ENCODE measurements at regions of chr4 and their contacts with region 1.

Region 1: GRCh38 chr4:79042079-79042674 is 102.9 kb upstream of the PAQR3 start:
- DNase-seq: no peak
- ATAC-seq: no peak
- H3K4me3 ChIP-seq: no peak overlapping the region
- H3K27ac ChIP-seq: no peak overlapping the region
- H3K4me1 ChIP-seq: no peaks in the 10 kb centered on the region
- H3K27me3 ChIP-seq: no peaks in the 10 kb centered on the region
- CTCF ChIP-seq: peak; percentile 41; the same call in 1 of the 2 replicates

Region 2: DNA sequence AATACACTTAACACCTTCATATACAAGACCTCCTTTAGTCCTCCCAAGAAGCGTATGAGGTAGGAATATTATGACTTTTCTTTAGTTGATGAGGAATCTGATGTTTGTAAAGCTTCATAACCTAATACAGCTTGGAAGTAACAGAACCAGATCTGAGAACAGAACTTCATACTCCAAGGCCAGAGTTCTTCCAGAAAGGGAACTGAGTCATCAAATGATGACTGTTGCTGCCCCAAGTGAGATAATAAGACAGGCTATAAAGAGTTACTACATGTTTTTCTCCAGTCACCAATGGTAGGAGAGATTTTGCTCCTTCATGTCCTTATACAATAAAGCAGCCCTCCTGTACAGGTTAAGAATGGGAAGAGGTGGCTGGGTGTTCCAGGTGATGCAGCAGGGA is 564.9 kb before region 1 on chr4:
- CTCF ChIA-PET with region 1: no interaction called
- POLR2A ChIA-PET with region 1: no interaction called
- in situ Hi-C with region 1: no loop called
- intact Hi-C with region 1: no loop called
- DNase-seq: no peak
- ATAC-seq: no peak
- H3K4me3 ChIP-seq: no peak overlapping the region
- H3K27ac ChIP-seq: no peak overlapping the region
- H3K4me1 ChIP-seq: no peaks in the 10 kb centered on the region
- H3K27me3 ChIP-seq: no peaks in the 10 kb centered on the region
- CTCF ChIP-seq: no peak

Region 3: DNA sequence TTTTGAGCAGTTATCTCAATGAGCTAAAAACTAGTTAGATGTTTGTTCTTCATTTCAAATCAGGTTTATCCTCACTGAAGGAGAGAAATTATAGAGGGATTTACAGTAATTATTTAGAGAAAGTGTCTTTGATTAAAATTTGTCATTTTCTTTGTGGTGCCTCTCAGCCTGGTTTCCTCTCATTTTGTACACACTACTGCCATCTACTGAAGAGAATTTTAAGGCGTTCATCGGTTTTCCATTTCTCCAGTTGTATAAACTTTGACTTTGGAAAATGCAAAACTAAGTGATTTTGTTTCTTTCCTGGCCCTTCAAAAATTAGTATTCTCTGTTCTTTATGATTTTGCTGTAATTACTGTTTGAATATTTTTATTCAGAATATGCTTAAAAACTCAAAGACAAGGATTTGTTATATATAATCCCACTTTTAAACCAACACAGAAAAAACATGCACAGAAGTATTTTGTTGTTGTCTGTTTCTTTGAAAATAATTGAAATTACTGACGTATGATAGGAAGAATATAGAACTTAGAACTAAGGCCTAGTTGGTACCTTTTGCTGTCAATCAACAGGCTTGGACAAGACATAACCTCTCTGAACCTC is 525.0 kb before region 1 on chr4:
- CTCF ChIA-PET with region 1: no interaction called
- POLR2A ChIA-PET with region 1: no interaction called
- in situ Hi-C with region 1: no loop called
- intact Hi-C with region 1: no loop called
- DNase-seq: no peak
- ATAC-seq: no peak
- H3K4me3 ChIP-seq: no peak overlapping the region
- H3K27ac ChIP-seq: no peak overlapping the region
- H3K4me1 ChIP-seq: no peaks in the 10 kb centered on the region
- H3K27me3 ChIP-seq: no peaks in the 10 kb centered on the region
- CTCF ChIP-seq: peak; percentile 45; the same call in 1 of the 2 replicates

Region 4: DNA sequence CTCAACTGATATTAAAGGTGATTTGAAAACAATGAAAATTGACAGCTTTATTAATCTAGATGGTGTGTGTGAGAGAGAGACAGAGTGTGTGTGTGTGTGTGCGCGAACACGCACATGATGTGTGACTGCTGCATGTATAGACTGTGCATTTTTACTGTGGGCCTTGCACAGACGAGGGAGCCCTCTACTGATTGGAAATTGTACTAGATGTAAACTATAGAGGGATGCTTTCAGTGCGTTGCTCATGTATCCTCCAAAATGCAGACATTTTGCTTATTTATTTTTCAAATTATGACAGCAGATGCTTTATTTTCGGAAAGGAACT is 534.2 kb after region 1 on chr4:
- CTCF ChIA-PET with region 1: no interaction called
- POLR2A ChIA-PET with region 1: no interaction called
- in situ Hi-C with region 1: no loop called
- intact Hi-C with region 1: loop called (anchors 10 kb)
- DNase-seq: peak; percentile 1
- ATAC-seq: peak; percentile 84
- H3K4me3 ChIP-seq: no peak overlapping the region
- H3K27ac ChIP-seq: no peak overlapping the region
- H3K4me1 ChIP-seq: no peaks in the 10 kb centered on the region
- H3K27me3 ChIP-seq: no peaks in the 10 kb centered on the region
- CTCF ChIP-seq: peak; percentile 64

Measured in Panc1 (cell line).